ENCODE measurements at regions of chr12 and their contacts with region 1.

Region 1: GRCh38 chr12:12779529-12779928 is 5.9 kb upstream of the APOLD1 start:
- DNase-seq: peak; percentile 88
- H3K4me3 ChIP-seq: no peak overlapping the region
- H3K27ac ChIP-seq: peak overlapping the region; percentile 20
- H3K4me1 ChIP-seq: peaks cover 33% of the 10 kb centered on the region
- H3K27me3 ChIP-seq: no peaks in the 10 kb centered on the region
- CTCF ChIP-seq: no peak

Region 2: DNA sequence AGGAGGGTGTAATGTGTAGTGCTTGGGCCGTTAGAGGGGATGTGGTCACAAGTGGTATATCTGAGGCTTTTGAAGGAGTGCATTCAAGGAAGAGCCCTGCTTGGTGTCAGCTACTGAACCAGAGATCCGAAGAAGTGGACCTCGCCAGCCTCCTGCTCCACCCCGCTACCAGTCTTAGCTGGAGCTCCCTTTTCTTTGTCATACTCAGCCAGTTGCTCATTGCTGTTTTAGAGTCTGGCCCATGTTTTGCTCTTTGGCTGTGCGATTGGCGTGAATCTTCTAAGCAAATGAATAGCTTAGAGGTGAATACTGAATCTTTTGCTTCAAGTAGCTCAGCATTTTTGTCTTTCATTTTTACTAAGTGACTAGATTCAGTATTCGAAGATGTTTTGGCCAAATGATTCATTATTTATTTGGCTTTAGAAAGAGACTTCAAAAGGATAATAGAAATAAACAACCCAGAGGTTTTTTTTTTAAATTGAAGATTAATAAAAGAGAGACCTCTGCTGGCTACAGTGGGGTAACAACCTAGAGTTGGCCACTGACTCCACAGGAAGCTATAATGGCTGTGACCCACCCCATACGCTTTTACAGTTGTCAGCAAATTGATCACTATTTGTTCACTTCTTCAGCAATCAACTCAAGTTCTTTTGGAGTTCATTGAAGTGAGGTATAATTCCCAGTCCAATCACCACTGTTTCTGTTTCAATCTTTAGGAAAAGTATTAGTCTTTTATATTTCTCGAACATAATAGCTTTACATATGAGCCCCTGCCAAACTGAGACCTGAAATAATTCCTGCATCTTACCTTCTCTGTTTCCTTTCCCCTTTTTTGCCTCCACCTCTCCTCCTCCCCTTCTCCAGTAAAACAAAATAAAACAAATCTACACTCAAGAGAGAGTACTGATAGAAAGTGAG is 42.5 kb before region 1 on chr12:
- CTCF ChIA-PET with region 1: interaction called, 6 read pairs
- dilution Hi-C with region 1: loop called (anchors 5 kb)
- in situ Hi-C with region 1: no loop called
- intact Hi-C with region 1: no loop called
- DNase-seq: peak; percentile 27
- H3K4me3 ChIP-seq: no peak overlapping the region
- H3K27ac ChIP-seq: no peak overlapping the region
- H3K4me1 ChIP-seq: peaks cover 6% of the 10 kb centered on the region
- H3K27me3 ChIP-seq: no peaks in the 10 kb centered on the region
- CTCF ChIP-seq: peak; percentile 46 to 53

Region 3: GRCh38 chr12:12837025-12837872 is 57.7 kb after region 1 on chr12:
- CTCF ChIA-PET with region 1: no interaction called
- dilution Hi-C with region 1: no loop called
- in situ Hi-C with region 1: no loop called
- intact Hi-C with region 1: no loop called
- DNase-seq: peak; percentile 91
- H3K4me3 ChIP-seq: no peak overlapping the region
- H3K27ac ChIP-seq: peak overlapping the region; percentile 99
- H3K4me1 ChIP-seq: peaks cover 68% of the 10 kb centered on the region
- H3K27me3 ChIP-seq: no peaks in the 10 kb centered on the region
- CTCF ChIP-seq: peak; percentile 67 to 69

Region 4: GRCh38 chr12:12946686-12947355 is 167.3 kb after region 1 on chr12:
- CTCF ChIA-PET with region 1: no interaction called
- dilution Hi-C with region 1: no loop called
- in situ Hi-C with region 1: no loop called
- intact Hi-C with region 1: no loop called
- DNase-seq: peak; percentile 39
- H3K4me3 ChIP-seq: no peak overlapping the region
- H3K27ac ChIP-seq: no peak overlapping the region
- H3K4me1 ChIP-seq: no peaks in the 10 kb centered on the region
- H3K27me3 ChIP-seq: no peaks in the 10 kb centered on the region
- CTCF ChIP-seq: no peak